Activated CD4-positive, alpha-beta T cell treated with anti-CD3 and anti-CD28 coated beads for 36 hours (primary cell): ENCODE measurements at regions of chr19 and their contacts with region 1.

Region 1: DNA sequence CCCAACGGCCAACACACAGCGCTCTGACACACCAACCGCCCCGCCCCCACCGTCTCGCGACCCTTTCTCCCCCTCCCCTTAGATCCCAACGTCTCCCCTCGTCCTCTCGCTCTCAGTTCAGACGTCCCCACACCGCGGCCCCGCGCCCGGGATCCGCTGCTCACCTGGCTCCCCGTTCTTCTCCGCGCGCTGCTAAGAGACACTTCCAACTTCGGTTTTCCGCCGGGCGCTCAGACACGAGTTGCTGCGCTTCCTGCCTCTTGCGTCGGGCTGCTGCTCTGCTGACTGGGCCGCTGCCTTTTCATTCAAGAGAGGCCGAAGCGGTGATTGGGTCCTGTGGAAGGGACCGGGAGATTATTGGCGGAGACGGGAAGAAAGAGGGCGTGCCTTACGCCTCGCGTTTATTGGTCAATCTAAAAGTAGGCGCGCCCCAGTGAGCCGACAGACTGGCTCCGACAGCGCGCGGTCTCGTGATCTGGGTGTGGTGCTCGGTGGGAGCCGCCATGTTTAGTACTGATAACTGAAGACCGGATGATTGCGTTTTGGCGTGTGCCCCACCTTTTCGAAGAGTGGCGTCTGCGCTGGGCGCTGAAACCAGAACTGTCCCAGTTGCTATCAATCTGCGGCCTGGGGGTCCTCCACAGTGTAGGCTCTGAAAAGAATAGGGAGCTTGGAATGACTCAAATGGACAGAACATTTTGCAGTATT is at the start of gene DDX39A:
- DNase-seq: peak; percentile 99
- ATAC-seq: peak; percentile 95
- H3K4me3 Mint-ChIP-seq: peak within 1 kb of the TSS; percentile 82
- H3K27ac Mint-ChIP-seq: peak within 1 kb of the TSS; percentile 92
- H3K4me1 Mint-ChIP-seq: peaks cover 29% of the 10 kb centered on the region
- H3K27me3 Mint-ChIP-seq: no peaks in the 10 kb centered on the region
- total RNA-seq, gene DDX39A: 168 to 185 TPM

Region 2: GRCh38 chr19:14198384-14199376 is 220.6 kb before region 1 on chr19:
- CTCF ChIA-PET with region 1: no interaction called
- POLR2A ChIA-PET with region 1: no interaction called
- intact Hi-C with region 1: loop called in 1 of 2 experiments (anchors 10 kb)
- DNase-seq: peak; percentile 21
- ATAC-seq: no peak
- H3K4me3 Mint-ChIP-seq: no peak overlapping the region
- H3K27ac Mint-ChIP-seq: no peak overlapping the region
- H3K4me1 Mint-ChIP-seq: peaks cover 21% of the 10 kb centered on the region
- H3K27me3 Mint-ChIP-seq: no peaks in the 10 kb centered on the region

Region 3: DNA sequence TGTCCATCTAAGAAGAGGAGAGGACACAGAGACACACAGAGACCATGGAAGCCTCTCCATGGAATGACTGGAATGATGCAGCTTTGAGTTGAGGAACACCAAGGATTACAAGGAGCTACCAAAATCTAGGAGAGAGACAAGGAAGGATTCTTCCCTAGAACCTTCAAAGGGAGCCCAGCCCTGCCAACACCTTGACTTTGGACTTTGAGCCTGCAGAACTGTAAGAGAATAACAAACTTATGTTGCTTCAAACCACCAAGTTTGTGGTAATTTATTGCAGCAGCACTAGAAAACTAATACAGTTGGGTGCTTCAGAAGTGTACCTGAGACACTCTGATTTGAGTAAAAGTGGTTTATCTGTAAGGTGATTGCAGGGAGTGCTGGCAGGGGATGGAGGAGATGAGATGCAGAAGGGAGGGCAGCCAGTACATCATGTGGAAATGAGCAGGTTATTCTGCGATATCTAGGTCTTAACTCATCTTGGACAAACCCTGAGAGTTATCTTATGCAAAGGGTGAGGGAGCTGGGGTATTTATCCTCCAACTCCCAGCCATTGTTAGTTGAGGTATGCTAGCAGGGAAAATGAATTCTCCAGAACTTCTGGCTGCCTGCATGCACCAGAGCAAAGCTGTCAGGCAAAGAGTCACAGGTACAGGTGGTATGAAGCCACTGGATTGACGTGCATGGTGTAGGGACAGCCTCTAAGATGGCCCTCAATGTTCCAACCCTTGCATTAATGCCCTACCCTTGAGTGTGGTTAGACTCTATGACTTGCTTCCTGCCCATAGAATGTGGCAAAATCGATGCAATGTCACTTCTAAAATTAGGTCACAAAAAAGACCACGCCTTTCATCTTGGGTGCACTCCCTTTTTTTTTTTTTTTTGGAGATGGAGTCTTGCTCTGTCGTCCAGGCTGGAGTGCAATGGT is 182.0 kb before region 1 on chr19:
- CTCF ChIA-PET with region 1: no interaction called
- POLR2A ChIA-PET with region 1: no interaction called
- intact Hi-C with region 1: no loop called
- DNase-seq: no peak
- ATAC-seq: no peak
- H3K4me3 Mint-ChIP-seq: no peak overlapping the region
- H3K27ac Mint-ChIP-seq: no peak overlapping the region
- H3K4me1 Mint-ChIP-seq: no peaks in the 10 kb centered on the region
- H3K27me3 Mint-ChIP-seq: no peaks in the 10 kb centered on the region

Region 4: GRCh38 chr19:14310055-14310454 is 109.2 kb before region 1 on chr19:
- CTCF ChIA-PET with region 1: no interaction called
- POLR2A ChIA-PET with region 1: no interaction called
- intact Hi-C with region 1: no loop called
- DNase-seq: no peak
- ATAC-seq: no peak
- H3K4me3 Mint-ChIP-seq: no peak overlapping the region
- H3K27ac Mint-ChIP-seq: no peak overlapping the region
- H3K4me1 Mint-ChIP-seq: peaks cover 6% of the 10 kb centered on the region
- H3K27me3 Mint-ChIP-seq: no peaks in the 10 kb centered on the region

Region 5: GRCh38 chr19:14383661-14384555 is 35.4 kb before region 1 on chr19:
- CTCF ChIA-PET with region 1: no interaction called
- POLR2A ChIA-PET with region 1: interaction called, 3 read pairs
- intact Hi-C with region 1: loop called (anchors 1 to 2 kb)
- DNase-seq: peak; percentile 72
- ATAC-seq: peak; percentile 10
- H3K4me3 Mint-ChIP-seq: peak overlapping the region; percentile 92
- H3K27ac Mint-ChIP-seq: peak overlapping the region; percentile 99
- H3K4me1 Mint-ChIP-seq: peaks cover 40% of the 10 kb centered on the region
- H3K27me3 Mint-ChIP-seq: no peaks in the 10 kb centered on the region

Region 6: GRCh38 chr19:14432791-14433553 is 13.7 kb after region 1 on chr19 and contains the start of gene PKN1:
- CTCF ChIA-PET with region 1: interaction called, 5 read pairs
- POLR2A ChIA-PET with region 1: no interaction called
- intact Hi-C with region 1: loop called (anchors 1 to 2 kb)
- DNase-seq: peak; percentile 75
- ATAC-seq: peak; percentile 11
- H3K4me3 Mint-ChIP-seq: peak within 1 kb of the TSS; percentile 73
- H3K27ac Mint-ChIP-seq: peak within 1 kb of the TSS; percentile 71
- H3K4me1 Mint-ChIP-seq: peaks cover 30% of the 10 kb centered on the region
- H3K27me3 Mint-ChIP-seq: no peaks in the 10 kb centered on the region
- total RNA-seq, gene PKN1: 173 to 176 TPM

Region 7: DNA sequence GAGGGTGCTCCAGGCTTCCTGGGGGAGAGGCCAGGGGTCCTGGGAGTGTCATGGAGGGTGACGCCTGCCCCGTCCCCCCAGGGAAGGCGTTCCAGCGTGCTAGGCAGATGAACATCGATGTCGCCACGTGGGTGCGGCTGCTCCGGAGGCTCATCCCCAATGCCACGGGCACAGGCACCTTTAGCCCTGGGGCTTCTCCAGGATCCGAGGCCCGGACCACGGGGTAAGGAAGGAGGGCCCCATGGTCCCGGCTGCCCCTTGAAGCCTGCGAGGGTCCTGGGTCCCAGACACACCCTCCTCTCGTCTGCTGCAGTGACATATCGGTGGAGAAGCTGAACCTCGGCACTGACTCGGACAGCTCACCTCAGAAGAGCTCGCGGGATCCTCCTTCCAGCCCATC is 44.5 kb after region 1 on chr19:
- CTCF ChIA-PET with region 1: no interaction called
- POLR2A ChIA-PET with region 1: no interaction called
- intact Hi-C with region 1: no loop called
- DNase-seq: no peak
- ATAC-seq: no peak
- H3K4me3 Mint-ChIP-seq: no peak overlapping the region
- H3K27ac Mint-ChIP-seq: no peak overlapping the region
- H3K4me1 Mint-ChIP-seq: no peaks in the 10 kb centered on the region
- H3K27me3 Mint-ChIP-seq: no peaks in the 10 kb centered on the region

Region 8: GRCh38 chr19:14517840-14518505 is 98.7 kb after region 1 on chr19 and contains the start of gene DNAJB1:
- CTCF ChIA-PET with region 1: no interaction called
- POLR2A ChIA-PET with region 1: no interaction called
- intact Hi-C with region 1: loop called in 1 of 2 experiments (anchors 1 kb)
- DNase-seq: peak; percentile 81
- ATAC-seq: peak; percentile 56
- H3K4me3 Mint-ChIP-seq: peak within 1 kb of the TSS; percentile 94
- H3K27ac Mint-ChIP-seq: peak within 1 kb of the TSS; percentile 94
- H3K4me1 Mint-ChIP-seq: peaks cover 60% of the 10 kb centered on the region
- H3K27me3 Mint-ChIP-seq: no peaks in the 10 kb centered on the region
- total RNA-seq, gene DNAJB1: 69.3 to 72.6 TPM

Region 9: GRCh38 chr19:14689598-14690503 is 270.6 kb after region 1 on chr19 and contains the start of gene ZNF333:
- CTCF ChIA-PET with region 1: no interaction called
- POLR2A ChIA-PET with region 1: no interaction called
- intact Hi-C with region 1: loop called in 1 of 2 experiments (anchors 1 kb)
- DNase-seq: peak; percentile 100
- ATAC-seq: peak; percentile 94
- H3K4me3 Mint-ChIP-seq: peak within 1 kb of the TSS; percentile 79
- H3K27ac Mint-ChIP-seq: peak within 1 kb of the TSS; percentile 95
- H3K4me1 Mint-ChIP-seq: peaks cover 17% of the 10 kb centered on the region
- H3K27me3 Mint-ChIP-seq: no peaks in the 10 kb centered on the region
- total RNA-seq, gene ZNF333: 11.7 to 12.7 TPM